Sigmoid colon (tissue), 7 donors: ENCODE measurements at regions of chr14 and their contacts with region 1.

Region 1: GRCh38 chr14:103500148-103500990 is 22.3 kb downstream of the CKB start:
- DNase-seq: peak; percentile 96
- H3K4me3 ChIP-seq: no peak overlapping the region
- H3K27ac ChIP-seq: peak overlapping the region; percentile 46 to 66 (median 62)
- H3K4me1 ChIP-seq: peaks cover 0 to 8% (median 3%) of the 10 kb centered on the region in 4 donors
- H3K27me3 ChIP-seq: no peaks in the 10 kb centered on the region
- CTCF ChIP-seq: peak; percentile 91 to 93 (median 92)
- EP300 ChIP-seq: no peak
- POLR2A ChIP-seq: no peak

Region 2: DNA sequence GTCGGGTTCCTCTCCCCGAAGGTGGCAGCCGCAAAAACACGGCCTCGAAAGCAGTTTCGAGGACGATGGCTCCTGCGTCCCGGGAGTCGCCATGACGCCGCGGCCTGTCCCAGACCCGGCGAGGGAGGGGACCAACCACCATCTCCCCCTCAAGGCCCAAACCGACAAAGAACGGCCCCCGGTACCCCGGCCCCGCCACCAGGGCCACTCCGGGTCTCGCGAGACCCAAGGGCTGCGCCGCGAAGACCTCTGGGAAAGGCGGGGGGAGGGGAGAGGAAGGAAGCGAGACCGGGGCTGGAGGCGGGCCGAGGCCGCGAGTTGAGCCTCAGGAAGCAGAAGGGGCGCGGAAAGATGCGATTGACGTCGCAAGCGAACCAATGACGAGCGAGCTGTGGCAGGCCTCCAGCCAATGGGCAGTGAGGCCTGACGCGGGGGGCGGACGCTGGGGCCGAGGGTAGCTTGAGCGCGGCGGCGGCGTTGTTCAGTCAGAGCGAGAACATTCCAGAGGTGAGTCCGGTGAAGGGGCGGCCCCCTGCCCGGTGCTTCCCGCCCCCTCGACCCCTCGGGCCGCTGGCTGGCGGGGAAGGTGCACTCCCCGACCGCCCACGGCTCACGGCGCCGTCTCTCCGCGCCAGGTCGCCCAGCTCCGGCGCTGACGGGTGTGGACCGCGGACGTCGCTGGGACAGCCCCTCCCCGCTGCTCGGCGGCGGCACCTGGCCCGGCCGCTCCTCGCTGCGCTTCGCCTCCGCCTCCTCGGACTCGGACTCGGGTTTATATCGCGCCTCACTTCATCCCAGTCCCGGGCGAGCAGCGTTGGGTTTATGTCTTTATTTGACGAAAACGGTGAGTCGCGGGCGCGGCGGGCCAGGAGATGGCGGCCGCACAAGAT is 166.4 kb before region 1 on chr14 and contains the start of gene EIF5:
- intact Hi-C with region 1: loop called (anchors 10 kb)
- DNase-seq: peak; percentile 100
- H3K4me3 ChIP-seq: peak within 1 kb of the TSS; percentile 91 to 98 (median 98)
- H3K27ac ChIP-seq: peak within 1 kb of the TSS; percentile 99 to 100 (median 100)
- H3K4me1 ChIP-seq: peaks cover 0 to 44% (median 26%) of the 10 kb centered on the region in 4 donors
- H3K27me3 ChIP-seq: no peaks in the 10 kb centered on the region
- CTCF ChIP-seq: peak; percentile 21 to 58 (median 43)
- EP300 ChIP-seq: peak in 1 of 4 donors; percentile 78
- POLR2A ChIP-seq: peak; percentile 92 to 96
- total RNA-seq, gene EIF5: 170 to 305 (median 215) TPM

Region 3: GRCh38 chr14:103444837-103445524 is 55.4 kb before region 1 on chr14:
- intact Hi-C with region 1: no loop called
- DNase-seq: no peak
- H3K4me3 ChIP-seq: no peak overlapping the region
- H3K27ac ChIP-seq: no peak overlapping the region
- H3K4me1 ChIP-seq: peaks cover 0 to 8% (median 0%) of the 10 kb centered on the region in 4 donors
- H3K27me3 ChIP-seq: no peaks in the 10 kb centered on the region
- CTCF ChIP-seq: no peak
- EP300 ChIP-seq: no peak
- POLR2A ChIP-seq: no peak

Region 4: GRCh38 chr14:103546652-103547454 is 46.5 kb after region 1 on chr14:
- intact Hi-C with region 1: loop called (anchors 1 kb)
- DNase-seq: peak; percentile 88
- H3K4me3 ChIP-seq: no peak overlapping the region
- H3K27ac ChIP-seq: peak overlapping the region; percentile 55 to 98 (median 93)
- H3K4me1 ChIP-seq: peaks cover 0 to 93% (median 91%) of the 10 kb centered on the region in 4 donors
- H3K27me3 ChIP-seq: no peaks in the 10 kb centered on the region
- CTCF ChIP-seq: peak; percentile 95 to 97 (median 97)
- EP300 ChIP-seq: no peak
- POLR2A ChIP-seq: no peak